Activated CD8-positive, alpha-beta T cell treated with anti-CD3 and anti-CD28 coated beads for 36 hours (primary cell): ENCODE measurements at regions of chr5 and their contacts with region 1.

Region 1: DNA sequence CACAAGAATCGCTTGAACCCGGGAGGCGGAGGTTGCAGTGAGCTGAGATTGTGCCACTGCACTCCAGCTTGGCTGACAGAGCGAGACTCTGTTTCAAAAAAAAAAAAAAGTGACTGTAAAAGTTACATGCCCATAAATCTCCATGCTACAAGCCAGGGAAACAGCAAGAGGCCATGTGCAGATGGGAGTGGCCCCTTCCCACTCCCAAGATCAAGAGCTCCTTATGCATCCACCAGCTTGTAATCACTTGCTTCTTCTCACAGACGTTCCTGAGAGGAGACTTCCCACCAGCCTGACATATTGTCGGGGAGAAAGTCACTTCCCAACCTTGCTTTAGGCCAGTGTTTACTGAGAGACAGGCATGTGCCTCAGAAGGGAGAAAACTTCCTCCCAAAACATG is 45.6 kb upstream of the N4BP3 start:
- DNase-seq: no peak
- ATAC-seq: no peak
- H3K4me3 Mint-ChIP-seq: no peak overlapping the region
- H3K27ac Mint-ChIP-seq: no peak overlapping the region
- H3K4me1 Mint-ChIP-seq: peaks cover 16% of the 10 kb centered on the region
- H3K27me3 Mint-ChIP-seq: no peaks in the 10 kb centered on the region
- CTCF ChIP-seq: no peak

Region 2: GRCh38 chr5:177984565-177985206 is 83.1 kb before region 1 on chr5:
- CTCF ChIA-PET with region 1: interaction called, 14 read pairs
- POLR2A ChIA-PET with region 1: interaction called, 3 read pairs
- intact Hi-C with region 1: no loop called
- DNase-seq: peak; percentile 17
- ATAC-seq: no peak
- H3K4me3 Mint-ChIP-seq: peak overlapping the region; percentile 52
- H3K27ac Mint-ChIP-seq: no peak overlapping the region
- H3K4me1 Mint-ChIP-seq: peaks cover 8% of the 10 kb centered on the region
- H3K27me3 Mint-ChIP-seq: peaks cover 57% of the 10 kb centered on the region
- CTCF ChIP-seq: no peak

Region 3: GRCh38 chr5:178098605-178099004 is 30.9 kb after region 1 on chr5:
- CTCF ChIA-PET with region 1: no interaction called
- POLR2A ChIA-PET with region 1: no interaction called
- intact Hi-C with region 1: no loop called
- DNase-seq: no peak
- ATAC-seq: no peak
- H3K4me3 Mint-ChIP-seq: no peak overlapping the region
- H3K27ac Mint-ChIP-seq: no peak overlapping the region
- H3K4me1 Mint-ChIP-seq: peaks cover 9% of the 10 kb centered on the region
- H3K27me3 Mint-ChIP-seq: no peaks in the 10 kb centered on the region
- CTCF ChIP-seq: no peak